Transverse colon (tissue), 4 donors: ENCODE measurements at regions of chr9 and their contacts with region 1.

Region 1: GRCh38 chr9:23412458-23412857 is 413.6 kb downstream of the ELAVL2 start:
- DNase-seq: no peak
- H3K4me3 ChIP-seq: no peak overlapping the region
- H3K27ac ChIP-seq: no peak overlapping the region
- H3K4me1 ChIP-seq: no peaks in the 10 kb centered on the region
- H3K27me3 ChIP-seq: no peaks in the 10 kb centered on the region
- CTCF ChIP-seq: no peak
- EP300 ChIP-seq: no peak
- POLR2A ChIP-seq: no peak

Region 2: GRCh38 chr9:23394189-23394588 is 18.3 kb before region 1 on chr9:
- in situ Hi-C with region 1: no loop called
- intact Hi-C with region 1: loop called (anchors 1 kb)
- DNase-seq: no peak
- H3K4me3 ChIP-seq: no peak overlapping the region
- H3K27ac ChIP-seq: no peak overlapping the region
- H3K4me1 ChIP-seq: no peaks in the 10 kb centered on the region
- H3K27me3 ChIP-seq: no peaks in the 10 kb centered on the region
- CTCF ChIP-seq: no peak
- EP300 ChIP-seq: no peak
- POLR2A ChIP-seq: no peak